ENCODE measurements at regions of chr2 and their contacts with region 1.

Region 1: GRCh38 chr2:234288974-234289455 is 207.9 kb downstream of the ARL4C start:
- DNase-seq: peak; percentile 72
- H3K4me3 Mint-ChIP-seq: no peak overlapping the region
- H3K27ac Mint-ChIP-seq: peak overlapping the region; percentile 98
- H3K4me1 Mint-ChIP-seq: peaks cover 81% of the 10 kb centered on the region
- H3K27me3 Mint-ChIP-seq: no peaks in the 10 kb centered on the region

Region 2: GRCh38 chr2:234271338-234271737 is 17.7 kb before region 1 on chr2:
- CTCF ChIA-PET with region 1: interaction called, 18 read pairs
- POLR2A ChIA-PET with region 1: interaction called, 3 read pairs
- DNase-seq: no peak
- H3K4me3 Mint-ChIP-seq: no peak overlapping the region
- H3K27ac Mint-ChIP-seq: no peak overlapping the region
- H3K4me1 Mint-ChIP-seq: peaks cover 82% of the 10 kb centered on the region
- H3K27me3 Mint-ChIP-seq: no peaks in the 10 kb centered on the region

Region 3: GRCh38 chr2:234308813-234309195 is 19.8 kb after region 1 on chr2:
- CTCF ChIA-PET with region 1: interaction called, 49 read pairs
- POLR2A ChIA-PET with region 1: interaction called, 7 read pairs
- DNase-seq: peak; percentile 81
- H3K4me3 Mint-ChIP-seq: peak overlapping the region; percentile 54
- H3K27ac Mint-ChIP-seq: peak overlapping the region; percentile 94
- H3K4me1 Mint-ChIP-seq: peaks cover 64% of the 10 kb centered on the region
- H3K27me3 Mint-ChIP-seq: no peaks in the 10 kb centered on the region

Region 4: GRCh38 chr2:234451852-234452625 is 163.0 kb after region 1 on chr2:
- CTCF ChIA-PET with region 1: interaction called, 4 read pairs
- POLR2A ChIA-PET with region 1: interaction called, 13 read pairs
- DNase-seq: no peak
- H3K4me3 Mint-ChIP-seq: peak overlapping the region; percentile 85
- H3K27ac Mint-ChIP-seq: peak overlapping the region; percentile 93
- H3K4me1 Mint-ChIP-seq: peaks cover 84% of the 10 kb centered on the region
- H3K27me3 Mint-ChIP-seq: peaks cover 2% of the 10 kb centered on the region

Region 5: DNA sequence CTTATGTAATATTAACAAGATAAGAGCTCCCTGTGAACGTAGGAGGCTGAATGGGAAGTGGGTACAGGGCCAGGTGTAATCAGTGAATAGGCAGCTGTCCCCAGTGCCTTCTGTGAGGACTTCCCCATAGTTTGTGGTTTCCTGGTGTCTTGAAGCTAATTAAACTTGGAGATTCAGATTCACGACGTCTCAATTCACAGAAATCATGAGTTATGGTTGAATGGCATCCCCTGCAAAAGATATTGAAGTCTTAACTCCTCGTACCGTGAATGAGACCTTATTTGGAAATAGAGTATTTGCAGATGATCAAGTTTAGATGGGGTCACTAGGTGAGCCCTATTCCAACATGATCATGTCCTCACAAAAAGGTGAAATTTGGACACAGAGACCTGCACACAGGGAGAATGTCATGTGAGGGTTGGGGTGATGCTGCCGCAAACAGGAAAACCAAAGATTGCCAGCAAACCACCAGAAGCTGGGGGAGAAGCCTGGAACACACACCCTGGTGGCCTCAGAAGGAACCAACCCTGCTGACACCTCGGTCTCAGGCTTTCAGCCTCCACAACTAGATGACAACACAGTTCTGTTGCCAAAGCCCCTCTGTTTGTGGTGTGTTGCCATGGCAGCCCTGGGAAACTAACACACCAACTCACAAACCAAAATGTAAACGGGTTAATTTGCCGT is 194.7 kb after region 1 on chr2:
- CTCF ChIA-PET with region 1: interaction called, 12 read pairs
- POLR2A ChIA-PET with region 1: interaction called, 5 read pairs
- DNase-seq: peak; percentile 90
- H3K4me3 Mint-ChIP-seq: peak overlapping the region; percentile 52
- H3K27ac Mint-ChIP-seq: peak overlapping the region; percentile 89
- H3K4me1 Mint-ChIP-seq: peaks cover 93% of the 10 kb centered on the region
- H3K27me3 Mint-ChIP-seq: no peaks in the 10 kb centered on the region